ENCODE measurements at regions of chr19 and their contacts with region 1.

Region 1: GRCh38 chr19:47247329-47247886 is 8.9 kb upstream of the CCDC9 start:
- DNase-seq: peak; percentile 84
- H3K4me3 ChIP-seq: no peak overlapping the region
- H3K27ac ChIP-seq: no peak overlapping the region
- H3K4me1 ChIP-seq: peaks cover 30% of the 10 kb centered on the region
- H3K27me3 ChIP-seq: peaks cover under 1% of the 10 kb centered on the region
- CTCF ChIP-seq: peak; percentile 96

Region 2: DNA sequence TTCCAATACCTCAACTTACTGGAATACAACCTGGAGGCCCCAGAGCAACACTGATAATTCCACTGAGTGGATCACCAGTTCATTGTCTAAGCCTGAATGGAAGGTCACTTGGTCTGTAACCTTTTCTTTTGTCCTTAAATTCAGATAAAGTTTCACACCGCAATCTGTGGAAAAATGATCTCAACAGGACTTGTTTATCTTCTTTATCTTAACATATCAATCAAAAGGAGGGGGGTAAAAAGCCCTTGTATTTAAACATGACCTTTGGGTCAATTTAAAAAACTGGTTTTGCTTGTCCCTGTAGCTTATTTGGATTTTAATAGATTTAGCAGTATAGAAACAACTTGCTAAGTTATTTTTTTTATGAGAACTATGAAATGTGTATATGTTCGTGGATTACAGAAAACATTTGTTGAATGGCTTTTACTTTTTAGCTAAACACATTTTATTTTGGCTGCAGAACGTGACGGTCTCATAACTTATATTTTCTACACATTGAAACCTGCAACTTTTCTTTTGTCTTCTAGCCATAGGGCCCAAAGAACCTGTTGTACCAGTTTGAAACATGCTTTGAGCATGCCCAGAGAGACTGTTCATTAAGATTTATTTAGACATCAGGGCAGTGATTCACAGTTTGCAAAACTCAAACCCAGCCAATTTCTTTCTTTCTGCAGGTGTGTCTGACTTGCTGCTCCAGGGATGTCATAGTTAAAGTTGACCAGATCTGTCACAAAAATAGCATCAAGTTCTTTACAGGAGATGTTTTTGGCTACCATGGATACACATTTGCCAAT is 95.0 kb before region 1 on chr19:
- intact Hi-C with region 1: loop called (anchors 5 kb)
- DNase-seq: no peak
- H3K4me3 ChIP-seq: no peak overlapping the region
- H3K27ac ChIP-seq: no peak overlapping the region
- H3K4me1 ChIP-seq: peaks cover 34% of the 10 kb centered on the region
- H3K27me3 ChIP-seq: no peaks in the 10 kb centered on the region
- CTCF ChIP-seq: no peak

Region 3: DNA sequence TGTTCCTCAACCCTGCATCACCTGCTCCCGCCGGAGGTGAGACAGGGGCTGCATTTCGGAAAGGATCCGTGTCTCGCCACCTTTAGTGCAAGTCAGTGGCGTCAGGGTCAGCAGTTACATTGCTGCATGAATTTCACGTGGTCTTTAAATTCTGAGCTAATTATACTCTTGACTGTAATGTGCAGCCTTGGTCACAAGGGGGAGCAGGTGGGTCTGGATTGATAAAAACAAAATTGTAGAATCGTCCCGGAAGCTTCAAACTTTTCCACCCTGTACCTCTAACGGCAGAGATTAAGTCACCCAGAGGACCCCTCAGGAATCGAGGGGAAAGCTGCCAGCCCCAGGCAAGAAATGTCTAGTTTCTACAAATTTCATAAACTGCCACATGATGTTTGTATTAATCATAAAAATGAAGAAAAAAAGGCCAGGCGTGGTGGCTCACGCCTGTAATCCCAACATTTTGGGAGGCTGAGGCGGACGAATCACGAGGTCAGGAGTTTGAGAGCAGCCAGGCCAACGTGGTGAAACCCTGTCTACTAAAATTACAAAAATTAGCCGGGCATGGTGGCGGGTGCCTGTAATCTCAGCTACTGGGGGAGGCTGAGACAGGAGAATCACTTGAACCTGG is 36.6 kb before region 1 on chr19:
- intact Hi-C with region 1: loop called (anchors 5 kb)
- DNase-seq: peak; percentile 65
- H3K4me3 ChIP-seq: no peak overlapping the region
- H3K27ac ChIP-seq: peak overlapping the region; percentile 53
- H3K4me1 ChIP-seq: peaks cover 25% of the 10 kb centered on the region
- H3K27me3 ChIP-seq: no peaks in the 10 kb centered on the region
- CTCF ChIP-seq: peak; percentile 86

Region 4: DNA sequence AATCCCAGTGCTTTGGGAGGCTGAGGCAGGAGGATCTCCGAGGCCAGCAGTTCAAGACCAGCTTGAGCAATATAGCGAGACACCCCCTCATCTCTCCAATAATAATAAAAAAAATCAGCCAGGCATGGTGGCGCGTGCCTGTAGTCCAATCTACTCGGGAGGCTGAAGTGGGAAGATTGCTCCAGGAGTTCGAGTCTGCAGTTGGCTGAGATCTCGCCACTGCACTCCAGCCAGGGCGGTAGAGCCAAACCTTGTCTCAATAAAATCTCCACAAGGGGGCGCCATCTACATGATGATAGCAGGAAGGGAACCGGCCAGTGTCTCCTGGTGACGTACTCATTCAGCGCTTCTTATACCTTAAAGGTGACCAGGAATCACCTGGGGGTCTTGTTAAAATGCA is 48.6 kb after region 1 on chr19:
- intact Hi-C with region 1: no loop called
- DNase-seq: no peak
- H3K4me3 ChIP-seq: no peak overlapping the region
- H3K27ac ChIP-seq: no peak overlapping the region
- H3K4me1 ChIP-seq: no peaks in the 10 kb centered on the region
- H3K27me3 ChIP-seq: no peaks in the 10 kb centered on the region
- CTCF ChIP-seq: peak; percentile 79